ENCODE measurements at regions of chr6 and their contacts with region 1.

Region 1: DNA sequence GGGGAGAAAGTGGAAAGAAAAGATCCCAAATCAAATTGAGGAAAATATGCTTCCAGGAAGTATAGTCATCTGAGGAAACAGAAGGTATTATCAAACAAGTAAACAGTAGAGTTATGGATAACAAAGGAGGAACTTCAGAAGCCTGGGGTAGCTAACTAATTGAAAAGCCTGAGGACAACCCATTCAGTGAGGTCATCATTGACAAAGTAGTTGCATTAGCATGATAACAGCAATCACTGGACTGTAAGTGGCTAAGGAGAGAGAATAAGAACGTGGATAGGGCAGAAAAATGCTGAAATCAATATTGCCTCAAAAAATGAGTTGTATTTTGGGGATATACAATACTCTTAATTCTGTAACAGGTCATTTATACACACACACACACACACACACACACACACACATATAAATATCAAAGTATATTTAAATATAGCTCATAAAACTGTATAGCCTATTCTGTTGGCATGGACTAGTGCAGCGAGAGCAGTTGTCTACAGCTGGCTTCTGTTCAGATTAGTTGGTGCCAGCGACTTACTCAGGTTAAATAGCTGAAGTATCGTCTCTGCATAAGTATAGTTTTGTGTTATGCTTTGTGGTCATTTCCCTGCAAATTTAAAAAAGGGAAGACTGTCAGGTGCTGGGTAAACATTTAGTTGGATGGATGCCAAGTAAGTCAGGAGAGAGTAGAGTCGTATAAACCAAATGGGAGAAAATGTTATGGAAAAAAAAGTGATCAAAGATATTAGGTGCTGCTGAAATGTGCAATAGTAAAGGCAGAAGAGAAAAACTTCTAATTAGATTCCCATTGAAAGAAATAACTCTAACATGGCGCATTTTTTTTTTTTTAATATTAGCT is 33.8 kb upstream of the CTAGE9 start:
- DNase-seq: no peak
- ATAC-seq: no peak
- H3K4me3 Mint-ChIP-seq: no peak overlapping the region
- H3K27ac Mint-ChIP-seq: no peak overlapping the region
- H3K4me1 Mint-ChIP-seq: peaks cover 9% of the 10 kb centered on the region
- H3K27me3 Mint-ChIP-seq: peaks cover 3% of the 10 kb centered on the region
- CTCF ChIP-seq: no peak

Region 2: DNA sequence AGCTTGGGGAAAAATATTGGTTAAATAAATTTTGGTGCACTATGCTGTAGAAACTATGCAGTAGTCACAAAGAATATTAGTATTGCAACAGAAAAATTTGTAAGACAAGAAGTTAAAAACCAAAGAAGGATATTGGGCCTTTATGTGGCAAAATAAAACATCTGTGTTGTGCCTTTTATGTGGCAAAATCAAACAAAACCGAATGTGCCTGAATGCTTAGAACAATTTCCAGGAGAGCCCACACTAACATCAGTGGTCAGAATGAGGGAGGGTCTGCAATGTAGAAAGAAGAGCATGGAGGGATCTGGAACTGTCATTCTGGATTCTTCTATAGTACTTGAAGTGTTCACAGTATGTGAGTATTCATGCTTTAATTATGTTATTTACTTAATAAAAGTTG is 1651.1 kb before region 1 on chr6:
- CTCF ChIA-PET with region 1: no interaction called
- POLR2A ChIA-PET with region 1: no interaction called
- intact Hi-C with region 1: loop called (anchors 5 kb)
- DNase-seq: no peak
- ATAC-seq: no peak
- H3K4me3 Mint-ChIP-seq: no peak overlapping the region
- H3K27ac Mint-ChIP-seq: no peak overlapping the region
- H3K4me1 Mint-ChIP-seq: peaks cover 8% of the 10 kb centered on the region
- H3K27me3 Mint-ChIP-seq: no peaks in the 10 kb centered on the region
- CTCF ChIP-seq: no peak